ENCODE measurements at regions of chr2 and their contacts with region 1.

Region 1: DNA sequence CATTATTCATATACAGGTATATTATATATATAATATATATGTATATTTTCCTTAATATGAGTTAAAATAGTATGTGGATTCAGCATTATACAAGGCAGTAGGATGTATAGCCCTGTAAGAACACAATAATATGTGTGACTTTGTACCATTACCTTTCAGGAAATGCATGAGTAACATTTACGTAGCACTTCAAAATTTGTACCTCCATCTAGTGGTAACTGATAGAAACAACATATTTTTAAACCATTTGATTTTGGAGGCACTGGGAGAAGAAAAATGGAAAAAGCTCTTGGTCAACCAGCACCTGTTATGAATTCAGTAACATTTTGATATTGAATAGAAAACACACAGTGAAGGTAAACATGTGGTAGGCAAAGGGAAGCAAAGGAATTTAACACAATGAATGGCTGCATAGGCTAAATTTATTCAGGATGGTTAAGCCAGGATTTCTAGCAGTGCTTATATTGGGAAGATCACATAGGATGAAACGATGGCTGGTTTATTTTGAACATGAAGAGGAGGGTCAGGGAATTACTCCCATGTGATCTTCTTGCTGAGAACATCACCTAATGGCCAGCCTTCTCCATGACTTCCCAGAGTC is 565.5 kb downstream of the CCDC85A start:
- DNase-seq: no peak
- H3K4me3 ChIP-seq: no peak overlapping the region
- H3K4me3 Mint-ChIP-seq: no peak overlapping the region
- H3K27ac Mint-ChIP-seq: no peak overlapping the region
- H3K4me1 ChIP-seq: no peaks in the 10 kb centered on the region
- H3K4me1 Mint-ChIP-seq: no peaks in the 10 kb centered on the region
- H3K27me3 ChIP-seq: no peaks in the 10 kb centered on the region
- H3K27me3 Mint-ChIP-seq: peaks cover 4% of the 10 kb centered on the region
- CTCF ChIP-seq: peak; percentile 47 to 51

Region 2: GRCh38 chr2:56288838-56289580 is 460.2 kb before region 1 on chr2:
- CTCF ChIA-PET with region 1: interaction called, 6 read pairs
- POLR2A ChIA-PET with region 1: no interaction called
- intact Hi-C with region 1: loop called (anchors 2 kb)
- DNase-seq: peak in 1 of 2 experiments; percentile 2
- H3K4me3 ChIP-seq: no peak overlapping the region
- H3K4me3 Mint-ChIP-seq: no peak overlapping the region
- H3K27ac Mint-ChIP-seq: no peak overlapping the region
- H3K4me1 ChIP-seq: no peaks in the 10 kb centered on the region
- H3K4me1 Mint-ChIP-seq: peaks cover 5% of the 10 kb centered on the region
- H3K27me3 ChIP-seq: no peaks in the 10 kb centered on the region
- H3K27me3 Mint-ChIP-seq: peaks cover 11% of the 10 kb centered on the region
- CTCF ChIP-seq: peak in 1 of 2 experiments; percentile 52